Activated B cell treated with CpG ODN at 0.5 μM for 24 hours (primary cell): ENCODE measurements at regions of chr2 and their contacts with region 1.

Region 1: DNA sequence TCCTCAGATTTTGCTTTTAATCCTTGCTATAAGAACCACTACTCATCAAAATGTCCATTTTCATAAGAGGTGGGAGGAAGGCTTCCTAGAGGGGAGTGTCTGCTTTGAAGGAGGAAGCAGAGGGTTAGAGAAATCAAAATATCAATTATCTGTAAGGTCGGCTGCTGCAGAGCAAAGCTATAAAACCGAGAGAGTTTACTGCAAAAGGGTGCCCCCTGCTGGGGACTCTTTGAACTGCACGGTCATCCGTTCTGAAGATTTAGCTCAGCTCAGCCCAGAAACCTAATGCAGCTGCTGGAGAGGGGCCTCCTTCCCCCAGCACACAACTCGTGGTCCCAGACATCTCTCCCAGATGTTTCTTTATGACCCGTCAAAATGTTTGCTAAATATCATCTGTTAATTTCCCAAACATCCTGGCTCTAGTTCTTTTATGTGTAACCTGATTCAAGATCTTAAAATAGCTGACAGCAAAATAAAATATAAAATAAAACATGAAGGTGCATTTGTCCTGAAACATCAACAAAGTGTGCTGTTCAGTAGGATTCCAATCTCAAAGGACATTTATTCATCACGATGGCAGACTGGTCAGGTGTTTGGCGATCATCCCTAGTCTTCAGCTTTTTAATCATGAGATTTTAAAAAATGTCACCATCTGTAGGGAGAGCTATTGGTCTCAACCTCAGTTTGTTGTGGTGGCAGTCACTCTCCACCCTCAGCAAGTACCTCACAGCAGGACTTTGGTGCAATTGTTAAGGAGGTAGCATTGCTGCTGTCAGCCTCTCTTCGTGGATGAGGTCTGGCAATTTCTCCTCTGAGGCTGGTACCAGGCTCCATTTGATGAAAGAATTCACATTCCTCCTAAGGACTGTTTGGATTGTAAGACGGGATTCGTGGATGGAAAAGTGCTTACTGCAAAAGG is 185.9 kb downstream of the MTX2 start:
- DNase-seq: peak; percentile 62
- ATAC-seq: peak; percentile 61
- H3K4me3 Mint-ChIP-seq: no peak overlapping the region
- H3K27ac Mint-ChIP-seq: no peak overlapping the region
- H3K4me1 Mint-ChIP-seq: peaks cover 4% of the 10 kb centered on the region
- H3K27me3 Mint-ChIP-seq: peaks cover 11% of the 10 kb centered on the region
- CTCF ChIP-seq: peak; percentile 81

Region 2: GRCh38 chr2:175690113-175690837 is 764.9 kb before region 1 on chr2:
- CTCF ChIA-PET with region 1: interaction called, 3 read pairs
- POLR2A ChIA-PET with region 1: no interaction called
- intact Hi-C with region 1: loop called (anchors 5 kb)
- DNase-seq: no peak
- ATAC-seq: no peak
- H3K4me3 Mint-ChIP-seq: no peak overlapping the region
- H3K27ac Mint-ChIP-seq: no peak overlapping the region
- H3K4me1 Mint-ChIP-seq: no peaks in the 10 kb centered on the region
- H3K27me3 Mint-ChIP-seq: peaks cover 1% of the 10 kb centered on the region
- CTCF ChIP-seq: no peak

Region 3: DNA sequence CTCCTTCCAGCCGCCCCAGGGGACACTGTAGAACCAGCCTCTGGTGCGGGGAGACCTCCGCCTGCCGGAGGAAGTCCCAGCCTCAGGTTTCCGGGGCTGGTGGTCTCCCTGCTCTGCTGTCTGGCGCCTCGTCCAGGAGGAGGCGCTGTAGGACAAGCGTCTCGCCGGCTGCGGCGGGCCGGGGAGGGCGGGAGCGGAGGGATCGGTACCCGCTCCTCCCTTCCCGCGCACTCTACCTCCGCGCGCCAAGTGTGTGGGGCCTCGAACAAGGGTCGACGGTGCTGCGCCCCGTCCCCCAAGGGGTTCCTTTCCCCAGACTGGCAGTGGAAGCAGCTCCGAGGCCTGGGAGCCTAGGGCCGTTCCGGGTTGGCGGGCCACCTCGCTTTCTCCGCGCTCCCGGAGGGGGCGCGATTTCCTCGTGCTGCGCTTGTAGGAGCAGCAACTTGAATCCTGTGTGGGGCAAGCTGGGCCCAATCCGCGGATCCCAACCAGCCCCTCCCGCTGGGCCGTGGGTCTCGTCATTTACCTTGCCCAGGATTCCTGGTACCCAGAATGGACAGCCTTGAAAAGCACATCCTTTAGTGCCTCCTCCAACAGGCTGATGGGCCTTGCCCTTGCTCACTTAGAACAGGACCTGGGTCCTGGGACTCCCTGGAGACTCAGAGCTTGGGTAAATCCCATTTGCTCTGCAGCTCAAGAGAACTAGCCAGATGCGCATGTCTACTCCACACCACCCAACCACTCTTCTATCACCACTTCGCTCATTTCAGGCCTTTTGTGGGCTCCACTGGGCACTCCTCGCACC is 314.4 kb before region 1 on chr2:
- CTCF ChIA-PET with region 1: interaction called, 10 read pairs
- POLR2A ChIA-PET with region 1: no interaction called
- intact Hi-C with region 1: loop called (anchors 1 kb)
- DNase-seq: peak; percentile 39
- ATAC-seq: peak; percentile 73
- H3K4me3 Mint-ChIP-seq: peak overlapping the region; percentile 28
- H3K27ac Mint-ChIP-seq: no peak overlapping the region
- H3K4me1 Mint-ChIP-seq: peaks cover 17% of the 10 kb centered on the region
- H3K27me3 Mint-ChIP-seq: peaks cover 74% of the 10 kb centered on the region
- CTCF ChIP-seq: no peak

Region 4: GRCh38 chr2:176554101-176555048 is 99.2 kb after region 1 on chr2:
- CTCF ChIA-PET with region 1: interaction called, 15 read pairs
- POLR2A ChIA-PET with region 1: no interaction called
- intact Hi-C with region 1: loop called (anchors 5 kb)
- DNase-seq: no peak
- ATAC-seq: peak; percentile 49
- H3K4me3 Mint-ChIP-seq: peak overlapping the region; percentile 71
- H3K27ac Mint-ChIP-seq: no peak overlapping the region
- H3K4me1 Mint-ChIP-seq: peaks cover 11% of the 10 kb centered on the region
- H3K27me3 Mint-ChIP-seq: peaks cover 30% of the 10 kb centered on the region
- CTCF ChIP-seq: peak; percentile 80

Region 5: GRCh38 chr2:176638167-176639015 is 183.2 kb after region 1 on chr2:
- CTCF ChIA-PET with region 1: interaction called, 5 read pairs
- POLR2A ChIA-PET with region 1: no interaction called
- intact Hi-C with region 1: loop called (anchors 10 kb)
- DNase-seq: peak; percentile 24
- ATAC-seq: peak; percentile 79
- H3K4me3 Mint-ChIP-seq: peak overlapping the region; percentile 66
- H3K27ac Mint-ChIP-seq: no peak overlapping the region
- H3K4me1 Mint-ChIP-seq: peaks cover 3% of the 10 kb centered on the region
- H3K27me3 Mint-ChIP-seq: peaks cover 45% of the 10 kb centered on the region
- CTCF ChIP-seq: peak; percentile 64

Region 6: GRCh38 chr2:176653479-176654443 is 198.6 kb after region 1 on chr2:
- CTCF ChIA-PET with region 1: interaction called, 10 read pairs
- POLR2A ChIA-PET with region 1: no interaction called
- intact Hi-C with region 1: no loop called
- DNase-seq: no peak
- ATAC-seq: peak; percentile 74
- H3K4me3 Mint-ChIP-seq: no peak overlapping the region
- H3K27ac Mint-ChIP-seq: no peak overlapping the region
- H3K4me1 Mint-ChIP-seq: no peaks in the 10 kb centered on the region
- H3K27me3 Mint-ChIP-seq: peaks cover 23% of the 10 kb centered on the region
- CTCF ChIP-seq: no peak

Region 7: GRCh38 chr2:177093371-177093770 is 638.2 kb after region 1 on chr2:
- CTCF ChIA-PET with region 1: no interaction called
- POLR2A ChIA-PET with region 1: no interaction called
- intact Hi-C with region 1: no loop called
- DNase-seq: no peak
- ATAC-seq: no peak
- H3K4me3 Mint-ChIP-seq: no peak overlapping the region
- H3K27ac Mint-ChIP-seq: no peak overlapping the region
- H3K4me1 Mint-ChIP-seq: no peaks in the 10 kb centered on the region
- H3K27me3 Mint-ChIP-seq: peaks cover 9% of the 10 kb centered on the region
- CTCF ChIP-seq: no peak